Naive thymus-derived CD4-positive, alpha-beta T cell (primary cell): ENCODE measurements at regions of chr16 and their contacts with region 1.

Region 1: GRCh38 chr16:50585331-50585776 is 37.2 kb downstream of the NKD1 start:
- DNase-seq: no peak
- ATAC-seq: no peak
- H3K4me3 ChIP-seq: no peak overlapping the region
- H3K4me3 Mint-ChIP-seq: no peak overlapping the region
- H3K27ac ChIP-seq: no peak overlapping the region
- H3K27ac Mint-ChIP-seq: no peak overlapping the region
- H3K4me1 ChIP-seq: peaks cover 0 to 32% of the 10 kb centered on the region in 2 donors
- H3K4me1 Mint-ChIP-seq: peaks cover 20 to 54% (median 39%) of the 10 kb centered on the region in 7 donors
- H3K27me3 ChIP-seq: no peaks in the 10 kb centered on the region
- H3K27me3 Mint-ChIP-seq: no peaks in the 10 kb centered on the region

Region 2: GRCh38 chr16:50573947-50574744 is 11.2 kb before region 1 on chr16:
- CTCF ChIA-PET with region 1: interaction called, 3 read pairs
- POLR2A ChIA-PET with region 1: interaction called, 4 read pairs
- intact Hi-C with region 1: loop called in 1 of 2 experiments (anchors 2 kb)
- DNase-seq: no peak
- ATAC-seq: no peak
- H3K4me3 ChIP-seq: no peak overlapping the region
- H3K4me3 Mint-ChIP-seq: no peak overlapping the region
- H3K27ac ChIP-seq: no peak overlapping the region
- H3K27ac Mint-ChIP-seq: peak overlapping the region in 4 of 9 donors; percentile 33 to 63 (median 56)
- H3K4me1 ChIP-seq: no peaks in the 10 kb centered on the region
- H3K4me1 Mint-ChIP-seq: peaks cover 0 to 33% (median 16%) of the 10 kb centered on the region in 7 donors
- H3K27me3 ChIP-seq: no peaks in the 10 kb centered on the region
- H3K27me3 Mint-ChIP-seq: no peaks in the 10 kb centered on the region

Region 3: DNA sequence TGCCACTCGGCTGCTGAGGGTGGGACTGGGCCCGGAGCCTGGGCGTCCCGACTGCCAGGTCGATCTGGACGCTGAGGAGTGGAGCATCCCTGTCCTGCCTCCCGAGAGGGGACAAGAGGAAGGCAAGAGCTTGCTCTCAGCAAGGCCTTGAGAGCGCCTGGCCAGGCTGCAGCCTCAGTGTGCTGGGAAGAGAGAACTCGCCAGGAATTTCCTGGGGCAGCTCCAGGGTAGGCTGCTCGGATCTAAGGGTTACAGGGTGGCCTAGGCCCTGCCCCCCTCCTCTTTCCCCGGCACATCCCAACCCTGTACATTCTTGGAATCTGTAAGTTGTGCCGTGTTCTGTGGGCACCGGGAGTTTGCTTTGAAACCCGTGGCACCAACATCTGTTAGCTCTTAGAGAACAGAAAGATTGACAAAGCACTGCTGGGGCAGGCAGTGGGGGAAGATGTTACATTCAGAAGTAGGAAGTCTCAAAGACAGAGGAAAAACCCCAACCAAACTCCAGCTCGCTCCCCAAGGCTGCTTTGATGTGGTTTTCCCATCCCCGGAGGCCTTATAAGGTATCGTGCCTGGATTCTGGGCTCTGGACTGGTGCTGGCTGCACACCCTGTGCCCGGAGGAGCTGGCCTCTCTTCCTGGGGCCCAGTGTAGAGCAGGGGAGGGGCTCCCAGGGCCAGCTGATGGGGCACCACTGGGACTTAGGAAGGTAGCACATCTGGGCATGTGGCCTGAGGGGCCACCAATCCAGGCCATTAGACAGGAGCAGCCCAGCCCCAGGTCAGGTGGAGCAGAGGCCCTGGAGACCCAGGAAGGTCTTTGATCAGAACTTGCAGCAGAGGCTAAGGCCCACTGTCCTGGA is 18.1 kb after region 1 on chr16:
- CTCF ChIA-PET with region 1: interaction called, 3 read pairs
- POLR2A ChIA-PET with region 1: interaction called, 3 read pairs
- intact Hi-C with region 1: loop called in 1 of 2 experiments (anchors 2 kb)
- DNase-seq: no peak
- ATAC-seq: no peak
- H3K4me3 ChIP-seq: no peak overlapping the region
- H3K4me3 Mint-ChIP-seq: peak overlapping the region in 8 of 10 donors; percentile 49 to 79 (median 68)
- H3K27ac ChIP-seq: peak overlapping the region; percentile 43
- H3K27ac Mint-ChIP-seq: peak overlapping the region in 8 of 9 donors; percentile 78 to 96 (median 82)
- H3K4me1 ChIP-seq: peaks cover 13 to 35% of the 10 kb centered on the region in 2 donors
- H3K4me1 Mint-ChIP-seq: peaks cover 14 to 59% (median 47%) of the 10 kb centered on the region in 7 donors
- H3K27me3 ChIP-seq: no peaks in the 10 kb centered on the region
- H3K27me3 Mint-ChIP-seq: no peaks in the 10 kb centered on the region